Heart left ventricle (tissue), 16 donors: ENCODE measurements at regions of chr12 and their contacts with region 1.

Region 1: DNA sequence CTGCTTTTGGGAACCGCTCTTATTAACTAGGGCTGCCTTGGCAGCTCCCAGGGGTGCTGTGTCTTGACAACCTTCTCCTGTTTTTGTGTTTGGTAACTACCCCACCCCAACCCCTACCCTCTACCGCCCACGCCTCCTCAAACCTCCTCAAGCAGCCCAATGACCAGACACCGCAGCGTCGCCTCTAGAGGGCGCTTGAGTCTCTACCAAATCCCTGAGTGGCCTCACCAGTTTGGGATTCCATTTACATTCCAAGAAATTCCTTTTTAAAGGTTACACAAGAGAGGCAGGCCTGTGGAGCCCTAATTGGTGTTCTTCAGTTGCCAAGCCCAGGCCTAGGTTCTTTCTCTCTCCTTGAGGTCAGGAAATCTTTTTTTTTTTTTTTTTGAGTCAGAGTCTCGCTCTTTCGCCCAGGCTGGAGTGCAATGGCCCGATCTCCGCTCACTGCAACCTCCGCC is 72.3 kb upstream of the USP44 start:
- DNase-seq: peak; percentile 60 to 83 (median 67)
- ATAC-seq: peak; percentile 69 to 84 (median 79)
- H3K4me3 ChIP-seq: no peak overlapping the region
- H3K27ac ChIP-seq: peak overlapping the region in 8 of 12 donors; percentile 49 to 73 (median 68)
- H3K4me1 ChIP-seq: peaks cover 4 to 25% (median 20%) of the 10 kb centered on the region in 12 donors
- H3K27me3 ChIP-seq: no peaks in the 10 kb centered on the region
- CTCF ChIP-seq: peak; percentile 43 to 68 (median 58)
- POLR2A ChIP-seq: no peak

Region 2: DNA sequence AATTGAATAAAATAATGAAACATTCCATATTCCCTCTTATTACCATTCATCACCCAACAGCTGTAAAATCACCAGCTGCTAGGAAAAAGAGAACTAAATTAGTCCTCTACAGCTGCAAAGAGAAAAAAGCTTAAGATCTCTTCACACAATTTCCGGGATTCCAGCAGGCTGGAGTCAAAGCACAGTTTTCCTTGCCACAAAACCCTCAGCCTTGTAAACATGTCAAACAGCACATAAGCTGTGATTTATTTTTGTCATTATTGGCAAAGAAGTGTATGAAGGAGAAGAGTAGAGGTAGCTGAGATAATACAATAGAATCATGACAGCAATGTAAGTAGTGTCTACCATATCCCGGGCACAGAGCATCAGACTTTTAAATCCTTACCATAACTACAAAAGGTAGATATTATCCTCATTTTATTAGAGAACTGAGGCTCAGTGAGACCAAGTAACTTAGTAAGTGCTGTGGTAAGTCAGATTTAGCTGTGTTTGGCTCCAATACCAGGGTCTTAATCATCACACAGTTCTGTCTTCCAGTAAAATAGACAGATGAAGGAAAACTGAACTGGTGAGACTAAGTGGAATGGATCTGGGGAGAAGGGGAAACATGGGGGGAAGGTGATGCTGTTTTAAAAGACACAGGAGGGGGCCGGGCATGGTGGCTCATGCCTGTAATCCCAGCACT is 109.7 kb after region 1 on chr12:
- intact Hi-C with region 1: loop called in 3 of 10 experiments (anchors 5 to 10 kb)
- DNase-seq: no peak
- ATAC-seq: peak in 3 of 4 donors; percentile 14 to 41 (median 37)
- H3K4me3 ChIP-seq: no peak overlapping the region
- H3K27ac ChIP-seq: peak overlapping the region in 11 of 12 donors; percentile 33 to 77 (median 69)
- H3K4me1 ChIP-seq: peaks cover 0 to 65% (median 35%) of the 10 kb centered on the region in 12 donors
- H3K27me3 ChIP-seq: no peaks in the 10 kb centered on the region
- CTCF ChIP-seq: no peak
- POLR2A ChIP-seq: no peak

Region 3: GRCh38 chr12:95739561-95740313 is 116.1 kb after region 1 on chr12:
- intact Hi-C with region 1: loop called in 3 of 10 experiments (anchors 5 to 10 kb)
- DNase-seq: peak; percentile 61 to 87 (median 70)
- ATAC-seq: peak; percentile 84 to 92 (median 88)
- H3K4me3 ChIP-seq: peak overlapping the region in 4 of 12 donors; percentile 3 to 23 (median 4)
- H3K27ac ChIP-seq: peak overlapping the region; percentile 78 to 95 (median 86)
- H3K4me1 ChIP-seq: peaks cover 0 to 64% (median 38%) of the 10 kb centered on the region in 12 donors
- H3K27me3 ChIP-seq: no peaks in the 10 kb centered on the region
- CTCF ChIP-seq: no peak
- POLR2A ChIP-seq: no peak

Region 4: GRCh38 chr12:95763809-95764253 is 140.2 kb after region 1 on chr12:
- intact Hi-C with region 1: no loop called
- DNase-seq: peak in 4 of 5 donors; percentile 46 to 72 (median 51)
- ATAC-seq: peak; percentile 63 to 93 (median 92)
- H3K4me3 ChIP-seq: no peak overlapping the region
- H3K27ac ChIP-seq: peak overlapping the region in 11 of 12 donors; percentile 18 to 59 (median 39)
- H3K4me1 ChIP-seq: peaks cover 0 to 58% (median 30%) of the 10 kb centered on the region in 12 donors
- H3K27me3 ChIP-seq: no peaks in the 10 kb centered on the region
- CTCF ChIP-seq: no peak
- POLR2A ChIP-seq: no peak

Region 5: DNA sequence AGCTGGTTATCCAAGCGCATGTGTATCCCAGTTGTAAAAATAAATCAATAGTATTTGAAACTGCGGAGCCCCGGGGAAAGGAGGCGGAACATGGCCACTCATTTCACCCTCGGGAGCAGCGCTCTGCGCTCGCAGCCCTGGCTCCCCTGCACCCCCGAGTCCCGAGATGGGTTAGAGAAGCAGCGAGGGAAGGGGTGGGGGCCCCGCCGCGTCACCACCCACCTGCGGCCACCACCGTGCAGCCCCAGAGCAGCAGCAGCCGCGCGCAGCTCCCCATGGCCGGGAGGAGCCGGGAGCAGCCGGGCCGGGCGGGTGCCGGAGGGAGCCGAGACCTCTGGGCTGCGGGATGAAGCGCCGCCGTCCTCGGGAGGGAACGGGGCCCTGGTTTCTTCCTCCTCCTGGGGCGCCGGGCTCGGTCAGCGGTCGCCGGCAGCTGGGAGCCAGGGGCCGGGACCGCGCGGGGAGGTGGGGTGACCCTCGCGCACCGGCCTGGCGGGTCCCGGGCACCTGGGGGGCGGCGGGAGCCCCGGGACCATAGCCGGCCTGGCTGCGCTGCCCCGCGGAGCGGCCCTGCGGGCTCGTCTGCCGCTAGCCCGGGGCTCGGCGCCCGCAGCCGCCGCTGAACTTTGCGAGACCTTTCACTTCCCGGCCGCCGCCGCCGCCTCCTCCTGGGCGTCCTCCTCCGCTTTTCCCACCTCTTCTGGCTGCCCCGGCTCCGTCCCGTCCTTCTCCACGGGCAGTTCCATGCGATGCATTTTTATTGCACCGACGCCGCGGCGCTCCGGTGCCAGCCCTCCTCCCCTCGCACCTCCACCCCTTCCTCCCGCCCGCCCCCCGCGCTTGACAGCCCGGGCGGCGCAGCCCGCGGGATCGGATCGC is 166.7 kb after region 1 on chr12 and contains the start of gene NTN4:
- intact Hi-C with region 1: loop called in 3 of 10 experiments (anchors 5 to 10 kb)
- DNase-seq: peak; percentile 62 to 82 (median 69)
- ATAC-seq: peak; percentile 37 to 80 (median 64)
- H3K4me3 ChIP-seq: peak within 1 kb of the TSS; percentile 66 to 94 (median 88)
- H3K27ac ChIP-seq: peak within 1 kb of the TSS; percentile 75 to 93 (median 88)
- H3K4me1 ChIP-seq: peaks cover 5 to 49% (median 29%) of the 10 kb centered on the region in 12 donors
- H3K27me3 ChIP-seq: peaks cover 0 to 39% (median 0%) of the 10 kb centered on the region in 9 donors
- CTCF ChIP-seq: no peak
- POLR2A ChIP-seq: peak in 1 of 2 donors; percentile 41
- total RNA-seq, gene NTN4: 58.4 to 116 (median 71.5) TPM

Region 6: GRCh38 chr12:95810411-95810810 is 186.8 kb after region 1 on chr12:
- intact Hi-C with region 1: loop called in 3 of 10 experiments (anchors 2 to 5 kb)
- DNase-seq: no peak
- ATAC-seq: no peak
- H3K4me3 ChIP-seq: no peak overlapping the region
- H3K27ac ChIP-seq: no peak overlapping the region
- H3K4me1 ChIP-seq: no peaks in the 10 kb centered on the region
- H3K27me3 ChIP-seq: no peaks in the 10 kb centered on the region
- CTCF ChIP-seq: no peak
- POLR2A ChIP-seq: no peak

Region 7: DNA sequence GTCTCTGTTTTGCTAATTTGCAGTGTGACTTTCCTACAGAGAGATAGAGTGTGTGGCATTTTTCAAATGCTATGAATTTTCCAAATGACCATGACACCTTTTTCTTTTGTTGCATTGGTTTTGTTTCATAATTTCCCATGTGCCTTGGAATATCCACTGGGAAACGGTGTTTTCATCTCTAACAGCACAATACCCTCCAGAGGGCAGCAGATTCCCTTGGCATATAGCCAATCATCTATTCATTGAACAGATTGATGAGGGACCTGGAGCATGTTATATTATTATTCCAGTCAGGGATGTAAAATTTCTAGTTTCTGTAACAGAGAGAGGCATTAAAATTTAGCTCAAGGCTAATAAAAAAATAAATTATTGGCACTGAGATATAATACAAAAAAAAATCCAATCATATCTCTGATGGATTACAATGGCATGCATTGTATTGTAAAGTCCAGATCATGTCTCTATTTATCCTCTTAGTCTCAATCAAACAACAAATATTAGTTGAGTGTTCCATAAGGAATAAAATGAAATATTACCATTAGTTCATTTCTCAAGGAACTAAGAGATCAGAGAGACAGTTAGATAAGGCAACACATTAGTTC is 196.6 kb after region 1 on chr12:
- intact Hi-C with region 1: loop called in 1 of 10 experiments (anchors 2 kb)
- DNase-seq: no peak
- ATAC-seq: peak in 1 of 4 donors; percentile 52
- H3K4me3 ChIP-seq: no peak overlapping the region
- H3K27ac ChIP-seq: no peak overlapping the region
- H3K4me1 ChIP-seq: no peaks in the 10 kb centered on the region
- H3K27me3 ChIP-seq: no peaks in the 10 kb centered on the region
- CTCF ChIP-seq: peak; percentile 23 to 70 (median 48)
- POLR2A ChIP-seq: no peak